ENCODE measurements at regions of chr9 and their contacts with region 1.

Region 1: GRCh38 chr9:126965541-126966428 is 51.2 kb downstream of the RALGPS1 start:
- DNase-seq: peak; percentile 33 to 60
- H3K4me3 ChIP-seq: no peak overlapping the region
- H3K27ac ChIP-seq: no peak overlapping the region
- H3K4me1 ChIP-seq: peaks cover 0 to 8% (median under 1%) of the 10 kb centered on the region in 4 experiments; a peak in 4 of 7 replicates
- H3K27me3 ChIP-seq: no peaks in the 10 kb centered on the region
- CTCF ChIP-seq: peak; percentile 81 to 97 (median 92)
- EP300 ChIP-seq: no peak
- POLR2A ChIP-seq: no peak
- RAD21 ChIP-seq: peak; percentile 92 to 93

Region 2: GRCh38 chr9:126947529-126947928 is 18.3 kb before region 1 on chr9:
- CTCF ChIA-PET with region 1: interaction called, 164 read pairs
- POLR2A ChIA-PET with region 1: no interaction called
- DNase-seq: peak in 1 of 2 experiments; percentile 17
- H3K4me3 ChIP-seq: no peak overlapping the region
- H3K27ac ChIP-seq: no peak overlapping the region
- H3K4me1 ChIP-seq: peaks cover 0 to 3% (median 0%) of the 10 kb centered on the region in 4 experiments; a peak in 1 of 7 replicates
- H3K27me3 ChIP-seq: no peaks in the 10 kb centered on the region
- CTCF ChIP-seq: peak; percentile 58 to 82 (median 77)
- EP300 ChIP-seq: no peak; a peak in 1 of 3 replicates
- POLR2A ChIP-seq: no peak
- RAD21 ChIP-seq: peak; percentile 82 to 85

Region 3: DNA sequence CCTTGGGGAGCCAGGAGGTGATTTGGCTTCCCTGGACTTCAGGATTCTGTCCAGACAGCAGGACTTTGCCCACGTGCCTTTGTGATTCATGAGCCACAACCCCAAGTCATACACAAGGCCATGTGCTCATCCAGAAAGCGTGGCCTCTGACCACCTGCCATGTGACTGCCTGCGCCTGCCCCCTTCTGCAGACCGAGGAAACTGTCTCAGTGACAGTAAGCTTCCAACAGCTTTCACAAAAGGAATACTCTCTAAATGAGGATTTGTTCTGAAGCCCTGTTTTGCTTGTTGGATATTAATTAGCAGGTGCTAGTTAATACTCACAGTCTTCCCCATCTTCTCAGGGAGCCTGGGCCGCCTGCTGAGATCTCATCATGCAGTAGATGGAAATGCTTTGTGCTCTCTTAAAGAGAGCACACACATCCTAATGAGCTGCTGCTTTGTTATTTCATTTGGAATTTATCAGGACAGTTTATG is 193.6 kb after region 1 on chr9:
- CTCF ChIA-PET with region 1: interaction called, 19 read pairs
- POLR2A ChIA-PET with region 1: no interaction called
- DNase-seq: peak; percentile 17 to 66
- H3K4me3 ChIP-seq: no peak overlapping the region
- H3K27ac ChIP-seq: no peak overlapping the region
- H3K4me1 ChIP-seq: peaks cover 3 to 9% (median 6%) of the 10 kb centered on the region in 4 experiments
- H3K27me3 ChIP-seq: no peaks in the 10 kb centered on the region
- CTCF ChIP-seq: peak; percentile 50 to 66 (median 65)
- EP300 ChIP-seq: no peak
- POLR2A ChIP-seq: no peak
- RAD21 ChIP-seq: peak; percentile 60 to 66